Caco-2 (cell line): ENCODE measurements at regions of chr20 and their contacts with region 1.

Region 1: DNA sequence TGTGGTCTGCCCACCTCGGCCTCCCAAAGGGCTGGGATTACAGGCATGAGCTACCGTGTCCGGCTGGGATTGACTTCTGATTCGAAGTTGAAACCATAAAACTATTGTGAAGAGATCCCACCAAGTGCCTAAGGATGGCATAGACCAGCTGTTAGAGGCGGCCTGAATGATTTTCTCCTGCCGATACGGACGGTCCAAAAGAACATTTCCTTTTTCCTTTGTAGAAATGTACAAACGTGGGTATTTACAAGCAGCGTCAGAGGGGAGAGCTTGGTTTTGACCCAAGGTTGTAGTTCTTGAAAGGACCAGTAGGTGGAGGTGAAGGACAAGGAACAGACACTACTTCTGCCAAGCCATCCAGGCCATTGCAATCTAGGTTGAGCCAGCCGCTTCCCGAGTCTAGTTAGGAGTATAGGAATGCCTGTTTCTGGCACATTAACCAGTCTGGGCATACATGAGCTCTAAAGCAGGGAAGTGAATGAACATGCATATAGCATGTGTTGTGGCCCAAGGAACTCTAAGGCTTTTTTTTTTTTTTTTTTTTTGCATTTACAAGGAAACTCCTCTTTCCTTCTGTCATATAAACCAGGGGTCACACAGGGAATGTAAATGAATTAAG is 29.1 kb downstream of the MOCS3 start:
- DNase-seq: peak; percentile 91 to 96
- H3K4me3 ChIP-seq: no peak overlapping the region
- H3K4me3 Mint-ChIP-seq: no peak overlapping the region
- H3K27ac Mint-ChIP-seq: no peak overlapping the region
- H3K4me1 ChIP-seq: no peaks in the 10 kb centered on the region
- H3K4me1 Mint-ChIP-seq: peaks cover 14% of the 10 kb centered on the region
- H3K27me3 ChIP-seq: no peaks in the 10 kb centered on the region
- H3K27me3 Mint-ChIP-seq: peaks cover 9% of the 10 kb centered on the region
- CTCF ChIP-seq: peak; percentile 97 to 99

Region 2: DNA sequence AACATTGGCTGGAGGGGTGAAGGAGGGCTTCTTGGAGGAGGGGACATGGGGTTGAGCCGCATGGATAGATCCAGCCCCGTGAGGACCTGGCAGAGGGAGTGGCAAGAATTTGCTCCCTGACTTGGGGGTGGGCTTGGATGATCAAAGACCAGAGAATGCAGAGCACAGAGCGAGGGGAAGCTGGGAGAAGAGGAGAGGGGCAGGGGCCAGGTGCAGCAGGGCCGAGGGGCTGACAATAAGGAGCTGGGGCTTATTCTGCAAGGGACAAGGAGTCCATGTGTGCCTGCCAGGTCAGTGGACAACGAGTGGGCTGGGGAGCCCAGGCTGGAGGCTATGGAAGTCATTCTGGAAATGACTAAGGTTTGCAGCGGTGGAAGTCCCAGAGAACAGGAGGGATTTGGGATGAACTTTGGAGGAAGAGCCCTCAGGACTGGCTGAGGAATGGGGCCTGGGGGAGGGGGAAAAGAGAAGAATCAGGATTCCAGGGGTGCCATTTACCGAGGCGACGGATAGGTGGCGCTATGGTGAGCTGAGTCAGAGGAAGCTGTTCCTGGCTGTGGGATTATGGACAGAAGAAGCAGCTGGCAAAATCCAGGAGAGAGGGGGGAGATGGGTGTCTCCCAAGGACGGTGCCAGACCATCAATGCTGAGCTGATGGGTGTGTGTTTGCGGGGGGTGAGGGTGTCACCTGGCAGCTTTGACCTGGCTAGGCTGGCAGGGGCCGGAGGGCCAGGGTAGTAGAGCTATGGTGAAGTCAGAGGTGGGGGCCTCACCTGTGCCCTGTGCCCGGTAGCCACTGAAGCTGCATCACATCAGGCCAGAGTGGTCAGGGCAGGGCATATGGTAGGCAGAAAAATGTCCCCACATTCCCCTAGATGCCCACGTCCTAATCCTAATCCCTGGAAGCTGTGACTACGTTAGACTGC is 27.4 kb after region 1 on chr20:
- CTCF ChIA-PET with region 1: interaction called, 29 read pairs
- POLR2A ChIA-PET with region 1: no interaction called
- intact Hi-C with region 1: no loop called
- DNase-seq: peak; percentile 77 to 83
- H3K4me3 ChIP-seq: no peak overlapping the region
- H3K4me3 Mint-ChIP-seq: no peak overlapping the region
- H3K27ac Mint-ChIP-seq: no peak overlapping the region
- H3K4me1 ChIP-seq: no peaks in the 10 kb centered on the region
- H3K4me1 Mint-ChIP-seq: no peaks in the 10 kb centered on the region
- H3K27me3 ChIP-seq: no peaks in the 10 kb centered on the region; the same call in 1 of the 2 replicates
- H3K27me3 Mint-ChIP-seq: peaks cover 7% of the 10 kb centered on the region
- CTCF ChIP-seq: peak; percentile 87

Region 3: GRCh38 chr20:51300104-51300503 is 312.4 kb after region 1 on chr20:
- CTCF ChIA-PET with region 1: interaction called, 108 read pairs
- POLR2A ChIA-PET with region 1: no interaction called
- intact Hi-C with region 1: no loop called
- DNase-seq: no peak
- H3K4me3 ChIP-seq: no peak overlapping the region
- H3K4me3 Mint-ChIP-seq: no peak overlapping the region
- H3K27ac Mint-ChIP-seq: no peak overlapping the region
- H3K4me1 ChIP-seq: peaks cover 5% of the 10 kb centered on the region
- H3K4me1 Mint-ChIP-seq: peaks cover 1% of the 10 kb centered on the region
- H3K27me3 ChIP-seq: no peaks in the 10 kb centered on the region
- H3K27me3 Mint-ChIP-seq: peaks cover 10% of the 10 kb centered on the region
- CTCF ChIP-seq: no peak

Region 4: GRCh38 chr20:51318058-51318895 is 330.6 kb after region 1 on chr20:
- CTCF ChIA-PET with region 1: interaction called, 232 read pairs
- POLR2A ChIA-PET with region 1: no interaction called
- intact Hi-C with region 1: no loop called
- DNase-seq: peak in 1 of 2 experiments; percentile 71
- H3K4me3 ChIP-seq: no peak overlapping the region
- H3K4me3 Mint-ChIP-seq: no peak overlapping the region
- H3K27ac Mint-ChIP-seq: no peak overlapping the region
- H3K4me1 ChIP-seq: no peaks in the 10 kb centered on the region
- H3K4me1 Mint-ChIP-seq: peaks cover 2% of the 10 kb centered on the region
- H3K27me3 ChIP-seq: no peaks in the 10 kb centered on the region
- H3K27me3 Mint-ChIP-seq: peaks cover 8% of the 10 kb centered on the region
- CTCF ChIP-seq: peak; percentile 66 to 86

Region 5: DNA sequence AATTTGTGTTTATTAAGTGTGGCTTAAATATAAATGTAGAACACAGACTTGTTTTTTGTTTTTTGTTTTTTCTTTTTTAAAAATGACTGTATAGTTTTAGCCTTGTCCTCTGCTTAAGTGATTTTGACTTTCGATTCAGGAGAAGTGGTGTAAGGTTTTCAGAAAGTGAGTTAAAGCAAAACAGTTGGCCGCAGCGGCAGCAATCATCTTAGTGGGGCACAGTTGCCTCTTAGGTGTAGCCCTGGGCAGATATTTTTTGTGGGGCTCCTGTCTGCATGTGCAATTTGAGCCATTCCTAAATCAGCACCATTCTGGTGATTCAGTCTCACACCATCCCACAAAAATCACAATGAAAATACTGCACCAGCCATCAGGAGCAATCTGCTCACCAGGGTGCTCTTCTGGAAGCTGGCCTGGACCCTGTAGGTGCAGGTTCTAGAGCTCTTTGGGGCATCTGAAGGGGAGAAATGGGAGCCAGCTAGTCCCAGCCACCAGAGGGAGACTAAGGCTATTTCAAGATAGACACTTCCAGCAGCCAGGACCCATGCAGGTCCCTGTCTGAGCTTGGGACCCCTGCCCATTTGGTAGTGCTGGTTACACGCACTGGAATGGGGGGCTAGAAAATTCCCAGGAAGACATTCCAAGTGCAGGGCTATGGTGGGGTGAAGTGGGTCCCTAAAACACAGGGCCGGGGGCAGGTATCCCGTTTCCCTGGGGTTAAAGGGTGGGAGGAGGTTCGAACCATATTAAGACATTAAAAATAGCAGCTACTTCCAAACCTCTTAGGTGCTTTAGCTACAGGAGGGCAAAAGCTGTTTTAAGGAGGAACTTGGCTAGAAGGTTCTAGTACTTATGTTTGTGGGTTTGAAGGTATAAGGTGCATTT is 398.2 kb after region 1 on chr20:
- CTCF ChIA-PET with region 1: interaction called, 12 read pairs
- POLR2A ChIA-PET with region 1: no interaction called
- intact Hi-C with region 1: no loop called
- DNase-seq: peak in 1 of 2 experiments; percentile 68
- H3K4me3 ChIP-seq: no peak overlapping the region
- H3K4me3 Mint-ChIP-seq: no peak overlapping the region
- H3K27ac Mint-ChIP-seq: no peak overlapping the region
- H3K4me1 ChIP-seq: peaks cover 14% of the 10 kb centered on the region
- H3K4me1 Mint-ChIP-seq: peaks cover 20% of the 10 kb centered on the region
- H3K27me3 ChIP-seq: no peaks in the 10 kb centered on the region
- H3K27me3 Mint-ChIP-seq: no peaks in the 10 kb centered on the region
- CTCF ChIP-seq: peak; percentile 81 to 88

Region 6: DNA sequence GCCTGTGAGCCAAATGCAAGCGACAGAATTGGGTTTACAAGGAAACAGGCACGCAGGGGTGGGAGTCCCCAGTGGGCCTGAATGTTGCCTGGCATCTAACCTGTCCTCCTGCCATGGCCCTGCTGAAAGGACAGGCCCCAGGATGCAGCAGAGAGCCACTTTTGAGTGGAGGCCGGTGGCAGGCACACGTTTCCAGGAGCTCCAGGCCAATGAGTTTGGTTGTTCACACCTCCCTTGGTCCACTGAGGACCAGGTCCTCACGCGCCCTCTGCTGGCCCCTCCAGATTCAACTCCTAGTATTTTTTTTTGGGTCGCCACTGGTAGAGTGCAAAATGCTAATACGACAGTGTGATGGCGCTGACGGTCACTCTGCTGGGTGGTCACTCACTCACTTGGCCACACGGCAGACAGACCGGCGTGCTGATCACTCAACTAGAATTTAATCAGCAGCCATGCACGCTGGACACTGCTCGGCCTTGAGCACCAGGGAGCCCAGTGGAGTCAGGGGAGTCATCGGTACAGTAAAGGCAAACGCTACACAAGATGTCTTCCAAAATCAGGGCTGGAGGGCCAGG is 636.5 kb after region 1 on chr20:
- CTCF ChIA-PET with region 1: interaction called, 20 read pairs
- POLR2A ChIA-PET with region 1: no interaction called
- intact Hi-C with region 1: loop called (anchors 2 kb)
- DNase-seq: peak; percentile 83 to 86
- H3K4me3 ChIP-seq: no peak overlapping the region
- H3K4me3 Mint-ChIP-seq: no peak overlapping the region
- H3K27ac Mint-ChIP-seq: no peak overlapping the region
- H3K4me1 ChIP-seq: peaks cover 3% of the 10 kb centered on the region; the same call in 1 of the 2 replicates
- H3K4me1 Mint-ChIP-seq: no peaks in the 10 kb centered on the region
- H3K27me3 ChIP-seq: no peaks in the 10 kb centered on the region
- H3K27me3 Mint-ChIP-seq: no peaks in the 10 kb centered on the region
- CTCF ChIP-seq: peak; percentile 85 to 97